ENCODE measurements at regions of chr10 and their contacts with region 1.

Region 1: DNA sequence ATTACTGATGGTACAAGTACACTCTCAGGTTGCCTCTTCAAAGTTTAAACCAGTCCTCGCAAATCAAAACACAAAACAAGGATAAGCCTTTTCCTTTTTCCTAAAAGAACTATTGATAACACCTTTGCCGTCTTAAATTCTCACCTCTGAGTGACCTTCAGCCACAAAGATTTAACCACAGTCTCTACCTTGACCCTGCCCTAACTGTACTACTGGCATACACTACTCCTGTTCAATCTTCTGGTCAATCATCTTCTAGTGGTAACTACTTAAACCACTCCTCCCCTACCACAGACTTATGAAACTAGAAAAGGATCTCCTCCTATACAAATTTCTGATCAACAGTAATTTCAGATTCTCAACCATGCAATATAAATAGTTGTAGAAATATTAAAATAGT is 15.1 kb downstream of the UPF2 start:
- DNase-seq: no peak
- ATAC-seq: no peak
- H3K4me3 ChIP-seq: no peak overlapping the region
- H3K4me3 Mint-ChIP-seq: no peak overlapping the region
- H3K27ac ChIP-seq: no peak overlapping the region
- H3K27ac Mint-ChIP-seq: no peak overlapping the region
- H3K4me1 ChIP-seq: peaks cover 4% of the 10 kb centered on the region in 2 experiments
- H3K4me1 Mint-ChIP-seq: peaks cover 43 to 55% (median 44%) of the 10 kb centered on the region in 3 donors
- H3K27me3 ChIP-seq: no peaks in the 10 kb centered on the region
- H3K27me3 Mint-ChIP-seq: no peaks in the 10 kb centered on the region

Region 2: GRCh38 chr10:11898372-11899066 is 129.0 kb before region 1 on chr10:
- CTCF ChIA-PET with region 1: no interaction called
- POLR2A ChIA-PET with region 1: interaction called in 1 of 2 experiments, 10 read pairs
- DNase-seq: no peak
- ATAC-seq: no peak
- H3K4me3 ChIP-seq: no peak overlapping the region
- H3K4me3 Mint-ChIP-seq: no peak overlapping the region
- H3K27ac ChIP-seq: no peak overlapping the region
- H3K27ac Mint-ChIP-seq: no peak overlapping the region
- H3K4me1 ChIP-seq: no peaks in the 10 kb centered on the region
- H3K4me1 Mint-ChIP-seq: no peaks in the 10 kb centered on the region
- H3K27me3 ChIP-seq: peaks cover 0 to 16% of the 10 kb centered on the region in 2 experiments
- H3K27me3 Mint-ChIP-seq: no peaks in the 10 kb centered on the region